OCI-LY7 (cell line): ENCODE measurements at regions of chr9 and their contacts with region 1.

Region 1: GRCh38 chr9:69066955-69067354 is 31.4 kb downstream of the FXN start:
- DNase-seq: no peak
- H3K4me3 ChIP-seq: no peak overlapping the region
- H3K27ac ChIP-seq: no peak overlapping the region
- H3K4me1 ChIP-seq: no peaks in the 10 kb centered on the region
- CTCF ChIP-seq: no peak

Region 2: GRCh38 chr9:69035438-69036308 is 31.3 kb before region 1 on chr9 and contains the start of gene FXN:
- CTCF ChIA-PET with region 1: no interaction called
- POLR2A ChIA-PET with region 1: no interaction called
- intact Hi-C with region 1: no loop called
- DNase-seq: peak; percentile 87
- H3K4me3 ChIP-seq: peak within 1 kb of the TSS; percentile 83
- H3K27ac ChIP-seq: peak within 1 kb of the TSS; percentile 57
- H3K4me1 ChIP-seq: no peaks in the 10 kb centered on the region
- CTCF ChIP-seq: peak; percentile 97
- total RNA-seq, gene FXN: 5.6 and 6.9 TPM in 2 replicates

Region 3: DNA sequence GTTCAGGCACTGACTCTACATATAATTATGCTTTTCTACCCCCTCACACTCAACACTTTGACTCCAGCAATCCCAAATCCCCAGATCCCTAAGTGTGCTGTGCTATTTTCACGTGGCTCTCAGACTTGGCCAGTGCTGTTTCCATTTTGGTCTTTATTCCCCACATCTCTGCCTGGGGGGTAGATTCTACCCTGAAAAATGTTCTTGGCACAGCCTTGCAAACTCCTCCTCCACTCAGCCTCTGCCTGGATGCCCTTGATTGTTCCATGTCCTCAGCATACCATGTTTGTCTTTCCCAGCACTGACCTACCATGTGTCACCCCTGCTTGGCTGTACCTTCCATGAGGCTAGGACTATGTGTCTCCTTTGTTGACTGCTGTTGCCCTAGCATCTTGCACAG is 11.6 kb after region 1 on chr9:
- CTCF ChIA-PET with region 1: no interaction called
- POLR2A ChIA-PET with region 1: no interaction called
- intact Hi-C with region 1: no loop called
- DNase-seq: no peak
- H3K4me3 ChIP-seq: no peak overlapping the region
- H3K27ac ChIP-seq: no peak overlapping the region
- H3K4me1 ChIP-seq: no peaks in the 10 kb centered on the region
- CTCF ChIP-seq: no peak

Region 4: GRCh38 chr9:69097064-69097463 is 30.1 kb after region 1 on chr9:
- CTCF ChIA-PET with region 1: no interaction called
- POLR2A ChIA-PET with region 1: interaction called, 11 read pairs
- intact Hi-C with region 1: no loop called
- DNase-seq: no peak
- H3K4me3 ChIP-seq: no peak overlapping the region
- H3K27ac ChIP-seq: no peak overlapping the region
- H3K4me1 ChIP-seq: no peaks in the 10 kb centered on the region
- CTCF ChIP-seq: no peak

Region 5: GRCh38 chr9:69444021-69444420 is 377.1 kb after region 1 on chr9:
- CTCF ChIA-PET with region 1: no interaction called
- POLR2A ChIA-PET with region 1: no interaction called
- intact Hi-C with region 1: no loop called
- DNase-seq: no peak
- H3K4me3 ChIP-seq: no peak overlapping the region
- H3K27ac ChIP-seq: no peak overlapping the region
- H3K4me1 ChIP-seq: no peaks in the 10 kb centered on the region
- CTCF ChIP-seq: no peak